ENCODE measurements at regions of chr19 and their contacts with region 1.

Region 1: GRCh38 chr19:662962-663681 is at the start of gene RNF126:
- DNase-seq: peak; percentile 84 to 98 (median 95)
- ATAC-seq: peak; percentile 33
- H3K4me3 ChIP-seq: peak within 1 kb of the TSS; percentile 97
- H3K4me3 Mint-ChIP-seq: peak within 1 kb of the TSS; percentile 97
- H3K27ac ChIP-seq: peak within 1 kb of the TSS; percentile 92 to 97
- H3K27ac Mint-ChIP-seq: peak within 1 kb of the TSS; percentile 97
- H3K4me1 ChIP-seq: peaks cover 59% of the 10 kb centered on the region
- H3K4me1 Mint-ChIP-seq: peaks cover 40% of the 10 kb centered on the region
- H3K27me3 ChIP-seq: no peaks in the 10 kb centered on the region
- H3K27me3 Mint-ChIP-seq: no peaks in the 10 kb centered on the region
- CTCF ChIP-seq: no peak
- total RNA-seq, gene RNF126: 112 to 119 TPM

Region 2: GRCh38 chr19:531009-531752 is 131.9 kb before region 1 on chr19:
- CTCF ChIA-PET with region 1: no interaction called
- POLR2A ChIA-PET with region 1: interaction called, 6 read pairs
- intact Hi-C with region 1: loop called in 1 of 2 experiments (anchors 2 kb)
- DNase-seq: peak; percentile 70 to 95 (median 88)
- ATAC-seq: peak; percentile 79
- H3K4me3 ChIP-seq: peak overlapping the region; percentile 72
- H3K4me3 Mint-ChIP-seq: peak overlapping the region; percentile 87
- H3K27ac ChIP-seq: peak overlapping the region; percentile 34 to 75
- H3K27ac Mint-ChIP-seq: peak overlapping the region; percentile 61
- H3K4me1 ChIP-seq: peaks cover 45% of the 10 kb centered on the region
- H3K4me1 Mint-ChIP-seq: peaks cover 9% of the 10 kb centered on the region
- H3K27me3 ChIP-seq: peaks cover 0 to 3% of the 10 kb centered on the region in 2 experiments
- H3K27me3 Mint-ChIP-seq: no peaks in the 10 kb centered on the region
- CTCF ChIP-seq: no peak

Region 3: DNA sequence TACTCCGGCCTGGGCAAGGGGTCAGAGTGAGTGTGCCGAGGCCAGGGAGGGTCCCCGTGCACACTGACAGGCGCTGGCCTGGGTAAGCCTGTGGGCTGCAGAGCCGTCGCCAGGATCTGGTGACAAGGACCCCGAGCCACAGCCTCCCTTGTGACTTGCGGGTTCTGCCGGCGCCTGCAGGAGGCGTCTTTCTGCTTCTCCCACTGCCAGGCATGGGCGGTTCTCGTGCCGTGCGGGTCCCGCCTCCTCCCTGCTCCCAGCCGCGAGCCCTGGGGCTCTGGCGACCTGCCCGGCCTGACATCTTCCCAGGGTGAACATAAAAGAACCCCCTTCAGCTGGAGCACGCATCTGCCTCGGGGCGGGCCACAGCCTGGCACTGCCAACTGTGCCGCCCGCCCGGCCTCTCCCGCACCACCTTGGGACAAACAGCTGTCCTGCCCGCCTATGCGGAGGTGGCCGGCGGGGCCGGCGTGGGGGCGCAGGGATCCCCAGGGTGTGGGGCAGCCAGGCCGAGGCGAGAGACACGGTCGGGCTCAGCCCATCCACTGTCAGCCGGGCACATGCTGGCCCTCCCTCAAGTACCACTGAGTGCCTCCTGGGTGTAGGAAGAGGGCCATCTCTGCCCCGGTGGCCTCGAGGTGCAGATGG is 74.9 kb before region 1 on chr19:
- CTCF ChIA-PET with region 1: interaction called, 8 read pairs
- POLR2A ChIA-PET with region 1: interaction called, 3 read pairs
- intact Hi-C with region 1: loop called in 1 of 2 experiments (anchors 5 kb)
- DNase-seq: peak; percentile 32 to 86 (median 60)
- ATAC-seq: peak; percentile 69
- H3K4me3 ChIP-seq: no peak overlapping the region
- H3K4me3 Mint-ChIP-seq: peak overlapping the region; percentile 63
- H3K27ac ChIP-seq: no peak overlapping the region
- H3K27ac Mint-ChIP-seq: no peak overlapping the region
- H3K4me1 ChIP-seq: peaks cover 38% of the 10 kb centered on the region
- H3K4me1 Mint-ChIP-seq: peaks cover 5% of the 10 kb centered on the region
- H3K27me3 ChIP-seq: peaks cover 25 to 30% of the 10 kb centered on the region in 2 experiments
- H3K27me3 Mint-ChIP-seq: peaks cover 23% of the 10 kb centered on the region
- CTCF ChIP-seq: no peak

Region 4: DNA sequence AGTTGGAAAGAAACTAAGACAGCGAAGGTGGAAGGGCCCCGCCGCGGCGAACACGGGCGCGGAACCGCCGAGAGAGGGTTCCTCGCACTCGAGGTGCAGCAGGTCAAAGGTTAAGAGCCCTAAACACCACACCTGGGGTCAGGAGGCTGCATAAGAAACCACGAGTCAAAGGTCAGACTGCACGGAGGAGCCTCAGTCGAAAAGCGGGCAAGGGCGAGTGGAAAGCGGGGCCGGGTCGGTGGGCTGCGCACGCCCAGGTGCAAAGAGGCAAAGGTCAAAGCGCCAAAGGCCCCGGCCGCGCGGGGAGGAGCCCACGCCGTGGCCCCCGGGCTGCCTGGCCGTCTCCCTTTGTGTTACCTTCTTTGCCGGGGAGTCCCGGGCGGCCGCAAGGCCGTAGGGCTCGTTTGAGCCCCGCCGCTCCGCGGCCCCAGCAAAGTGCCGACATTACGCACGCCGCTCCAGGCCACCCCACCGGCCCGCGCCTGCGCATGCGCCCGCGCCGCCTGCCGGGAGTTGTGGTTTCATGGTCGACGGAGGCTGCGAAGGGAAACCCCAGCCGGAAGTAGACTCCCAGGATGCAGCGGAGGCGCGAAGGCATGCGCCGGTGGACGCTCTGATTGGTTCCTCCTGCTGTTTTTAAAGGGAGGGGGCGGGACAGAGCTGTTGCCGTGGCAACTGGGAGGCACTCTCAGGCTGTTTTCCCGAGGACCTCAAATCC is 29.9 kb before region 1 on chr19 and contains the start of gene POLRMT:
- CTCF ChIA-PET with region 1: interaction called, 4 read pairs
- POLR2A ChIA-PET with region 1: interaction called, 16 read pairs
- intact Hi-C with region 1: no loop called
- DNase-seq: peak; percentile 90 to 99 (median 95)
- ATAC-seq: peak; percentile 97
- H3K4me3 ChIP-seq: peak within 1 kb of the TSS; percentile 90
- H3K4me3 Mint-ChIP-seq: peak within 1 kb of the TSS; percentile 98
- H3K27ac ChIP-seq: peak within 1 kb of the TSS; percentile 52 to 67
- H3K27ac Mint-ChIP-seq: peak within 1 kb of the TSS; percentile 85
- H3K4me1 ChIP-seq: peaks cover 42% of the 10 kb centered on the region
- H3K4me1 Mint-ChIP-seq: peaks cover 35% of the 10 kb centered on the region
- H3K27me3 ChIP-seq: no peaks in the 10 kb centered on the region
- H3K27me3 Mint-ChIP-seq: no peaks in the 10 kb centered on the region
- CTCF ChIP-seq: no peak
- total RNA-seq, gene POLRMT: 54.4 to 56.2 TPM

Region 5: GRCh38 chr19:680287-681028 is 17.3 kb after region 1 on chr19:
- CTCF ChIA-PET with region 1: interaction called, 17 read pairs
- POLR2A ChIA-PET with region 1: interaction called, 45 read pairs
- intact Hi-C with region 1: loop called (anchors 1 kb)
- DNase-seq: peak; percentile 99 to 100 (median 100)
- ATAC-seq: peak; percentile 77
- H3K4me3 ChIP-seq: peak overlapping the region; percentile 52
- H3K4me3 Mint-ChIP-seq: peak overlapping the region; percentile 97
- H3K27ac ChIP-seq: peak overlapping the region; percentile 66 to 82
- H3K27ac Mint-ChIP-seq: peak overlapping the region; percentile 88
- H3K4me1 ChIP-seq: peaks cover 40% of the 10 kb centered on the region
- H3K4me1 Mint-ChIP-seq: peaks cover under 1% of the 10 kb centered on the region
- H3K27me3 ChIP-seq: peaks cover 10 to 11% of the 10 kb centered on the region in 2 experiments
- H3K27me3 Mint-ChIP-seq: peaks cover 6% of the 10 kb centered on the region
- CTCF ChIP-seq: no peak

Region 6: DNA sequence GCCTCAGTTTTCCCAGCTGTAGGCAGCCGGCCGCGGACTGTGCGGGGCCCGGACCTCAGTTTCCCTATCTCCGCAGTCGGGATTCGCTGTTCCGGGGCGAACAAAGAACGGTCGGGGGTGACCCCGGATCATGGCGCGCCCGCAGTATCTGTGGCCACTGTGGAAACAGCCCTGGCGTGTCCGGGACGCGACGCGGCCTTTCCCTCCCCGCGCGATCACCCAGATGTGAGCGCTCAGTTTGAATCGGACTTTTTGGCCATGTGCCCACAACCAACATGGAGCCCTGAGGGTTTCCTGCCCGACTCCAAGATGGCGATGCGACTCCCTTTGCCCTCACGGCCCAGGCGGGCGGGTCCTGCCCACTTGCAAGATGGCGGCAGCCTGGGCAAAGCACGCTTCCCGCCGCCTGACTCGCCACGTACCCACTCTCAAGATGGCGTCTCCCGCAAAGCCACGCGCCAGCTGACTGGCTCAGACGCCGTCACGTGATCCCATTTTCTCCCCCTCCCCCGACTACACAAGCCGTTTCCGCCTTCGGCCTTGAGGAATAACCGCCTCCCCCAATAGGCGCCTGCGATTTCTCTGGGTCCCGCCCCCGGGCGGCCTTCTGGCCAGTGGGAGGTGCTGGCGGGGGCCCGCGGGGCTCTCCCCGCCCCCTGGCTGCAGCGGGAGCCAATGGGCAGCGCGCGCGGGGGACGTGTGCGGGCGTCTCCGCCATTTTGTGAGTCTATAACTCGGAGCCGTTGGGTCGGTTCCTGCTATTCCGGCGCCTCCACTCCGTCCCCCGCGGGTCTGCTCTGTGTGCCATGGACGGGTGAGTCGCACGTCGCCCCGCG is 133.8 kb after region 1 on chr19 and contains the start of gene PTBP1:
- CTCF ChIA-PET with region 1: no interaction called
- POLR2A ChIA-PET with region 1: interaction called, 3 read pairs
- intact Hi-C with region 1: loop called (anchors 1 to 5 kb)
- DNase-seq: peak; percentile 97 to 100 (median 99)
- ATAC-seq: peak; percentile 83
- H3K4me3 ChIP-seq: peak within 1 kb of the TSS; percentile 87
- H3K4me3 Mint-ChIP-seq: peak within 1 kb of the TSS; percentile 89
- H3K27ac ChIP-seq: peak within 1 kb of the TSS; percentile 67 to 72
- H3K27ac Mint-ChIP-seq: peak within 1 kb of the TSS; percentile 87
- H3K4me1 ChIP-seq: peaks cover 48% of the 10 kb centered on the region
- H3K4me1 Mint-ChIP-seq: peaks cover 36% of the 10 kb centered on the region
- H3K27me3 ChIP-seq: no peaks in the 10 kb centered on the region
- H3K27me3 Mint-ChIP-seq: no peaks in the 10 kb centered on the region
- CTCF ChIP-seq: no peak
- total RNA-seq, gene PTBP1: 246 to 252 TPM

Measured in CD4-positive, alpha-beta T cell (primary cell).